Gastrocnemius medialis (tissue), 4 donors: ENCODE measurements at regions of chr5 and their contacts with region 1.

Region 1: GRCh38 chr5:112174959-112175594 is 244.0 kb downstream of the EPB41L4A start:
- DNase-seq: no peak
- ATAC-seq: peak in 1 of 2 donors; percentile 56
- H3K4me3 ChIP-seq: no peak overlapping the region
- H3K27ac ChIP-seq: no peak overlapping the region
- H3K4me1 ChIP-seq: peaks cover 0 to 6% of the 10 kb centered on the region in 2 donors
- H3K27me3 ChIP-seq: no peaks in the 10 kb centered on the region
- CTCF ChIP-seq: peak; percentile 22 to 69 (median 53)
- POLR2A ChIP-seq: no peak

Region 2: GRCh38 chr5:112196584-112196983 is 21.5 kb after region 1 on chr5:
- in situ Hi-C with region 1: no loop called
- intact Hi-C with region 1: no loop called
- DNase-seq: no peak
- ATAC-seq: no peak
- H3K4me3 ChIP-seq: no peak overlapping the region
- H3K27ac ChIP-seq: no peak overlapping the region
- H3K4me1 ChIP-seq: no peaks in the 10 kb centered on the region
- H3K27me3 ChIP-seq: no peaks in the 10 kb centered on the region
- CTCF ChIP-seq: no peak
- POLR2A ChIP-seq: no peak

Region 3: DNA sequence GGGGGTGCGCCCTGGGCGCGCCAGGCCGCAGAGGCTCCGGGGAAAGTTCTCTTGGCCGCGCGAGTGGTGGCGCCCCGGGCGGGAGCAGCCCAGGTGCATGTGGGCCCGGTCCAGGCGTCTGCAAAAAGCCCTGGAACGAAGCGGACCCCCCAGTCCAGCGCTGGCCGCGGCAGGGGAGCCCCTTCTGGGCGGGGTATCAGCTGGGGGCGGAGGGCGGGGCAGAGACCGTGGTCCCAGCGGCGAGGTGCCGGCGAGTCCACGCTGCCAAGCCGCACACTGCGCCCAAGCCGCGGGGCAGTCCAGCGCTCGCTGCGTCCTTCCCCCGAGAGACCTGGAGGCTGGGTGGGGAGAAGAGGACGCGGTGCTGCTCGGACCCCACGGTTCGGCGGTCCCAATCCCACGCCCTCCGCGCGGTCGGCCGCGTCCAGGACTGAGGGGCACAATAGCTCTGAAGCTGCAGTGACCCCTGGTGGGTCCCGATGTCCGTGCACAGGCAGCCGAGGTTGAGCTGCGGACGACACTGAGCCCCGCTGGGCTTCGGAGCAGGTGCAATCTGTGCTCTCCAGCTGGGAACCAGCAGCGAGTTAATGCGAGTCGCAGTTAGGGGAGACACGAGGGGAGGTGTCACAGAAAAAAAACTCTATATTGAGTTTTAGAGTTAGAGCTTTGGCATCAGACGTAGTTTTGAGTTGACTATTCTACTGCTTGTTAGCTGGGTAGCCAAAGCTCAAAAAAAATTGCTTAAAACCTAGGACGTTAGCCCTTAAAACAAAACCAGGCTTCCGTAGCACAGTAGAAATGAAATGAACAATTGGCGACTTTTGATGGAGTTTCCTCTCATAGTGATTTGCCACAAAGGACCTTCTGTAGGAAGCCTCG is 245.1 kb after region 1 on chr5:
- in situ Hi-C with region 1: loop called in 1 of 4 experiments (anchors 10 kb)
- intact Hi-C with region 1: loop called (anchors 1 kb)
- DNase-seq: peak; percentile 59 to 63
- ATAC-seq: peak; percentile 88 to 89
- H3K4me3 ChIP-seq: peak overlapping the region; percentile 72 to 94 (median 74)
- H3K27ac ChIP-seq: peak overlapping the region; percentile 61 to 80 (median 75)
- H3K4me1 ChIP-seq: no peaks in the 10 kb centered on the region
- H3K27me3 ChIP-seq: peaks cover 17 to 32% (median 31%) of the 10 kb centered on the region in 3 donors
- CTCF ChIP-seq: peak; percentile 57 to 92 (median 86)
- POLR2A ChIP-seq: no peak

Region 4: GRCh38 chr5:112737463-112738190 is 562.5 kb after region 1 on chr5 and contains the start of gene APC:
- in situ Hi-C with region 1: loop called in 2 of 4 experiments (anchors 25 kb)
- intact Hi-C with region 1: no loop called
- DNase-seq: peak; percentile 82 to 93
- ATAC-seq: peak; percentile 94 to 98
- H3K4me3 ChIP-seq: peak within 1 kb of the TSS; percentile 68 to 85 (median 72)
- H3K27ac ChIP-seq: peak within 1 kb of the TSS; percentile 59 to 78 (median 73)
- H3K4me1 ChIP-seq: peaks cover 24 to 27% of the 10 kb centered on the region in 2 donors
- H3K27me3 ChIP-seq: no peaks in the 10 kb centered on the region
- CTCF ChIP-seq: peak in 2 of 5 experiments; percentile 9 to 10
- POLR2A ChIP-seq: peak in 1 of 2 donors; percentile 37
- total RNA-seq, gene APC: 50.1 to 102 (median 60.4) TPM